CD8-positive, alpha-beta T cell (primary cell): ENCODE measurements at regions of chr11 and their contacts with region 1.

Region 1: GRCh38 chr11:9757809-9758636 is 94.1 kb downstream of the SWAP70 start:
- DNase-seq: peak; percentile 80 to 96 (median 92)
- ATAC-seq: peak; percentile 81
- H3K4me3 ChIP-seq: peak overlapping the region; percentile 83 to 91
- H3K4me3 Mint-ChIP-seq: peak overlapping the region; percentile 83
- H3K27ac ChIP-seq: peak overlapping the region; percentile 36 to 42
- H3K27ac Mint-ChIP-seq: peak overlapping the region; percentile 90
- H3K4me1 ChIP-seq: peaks cover 12% of the 10 kb centered on the region
- H3K4me1 Mint-ChIP-seq: peaks cover 24% of the 10 kb centered on the region
- H3K27me3 ChIP-seq: no peaks in the 10 kb centered on the region
- H3K27me3 Mint-ChIP-seq: no peaks in the 10 kb centered on the region
- CTCF ChIP-seq: peak; percentile 84

Region 2: DNA sequence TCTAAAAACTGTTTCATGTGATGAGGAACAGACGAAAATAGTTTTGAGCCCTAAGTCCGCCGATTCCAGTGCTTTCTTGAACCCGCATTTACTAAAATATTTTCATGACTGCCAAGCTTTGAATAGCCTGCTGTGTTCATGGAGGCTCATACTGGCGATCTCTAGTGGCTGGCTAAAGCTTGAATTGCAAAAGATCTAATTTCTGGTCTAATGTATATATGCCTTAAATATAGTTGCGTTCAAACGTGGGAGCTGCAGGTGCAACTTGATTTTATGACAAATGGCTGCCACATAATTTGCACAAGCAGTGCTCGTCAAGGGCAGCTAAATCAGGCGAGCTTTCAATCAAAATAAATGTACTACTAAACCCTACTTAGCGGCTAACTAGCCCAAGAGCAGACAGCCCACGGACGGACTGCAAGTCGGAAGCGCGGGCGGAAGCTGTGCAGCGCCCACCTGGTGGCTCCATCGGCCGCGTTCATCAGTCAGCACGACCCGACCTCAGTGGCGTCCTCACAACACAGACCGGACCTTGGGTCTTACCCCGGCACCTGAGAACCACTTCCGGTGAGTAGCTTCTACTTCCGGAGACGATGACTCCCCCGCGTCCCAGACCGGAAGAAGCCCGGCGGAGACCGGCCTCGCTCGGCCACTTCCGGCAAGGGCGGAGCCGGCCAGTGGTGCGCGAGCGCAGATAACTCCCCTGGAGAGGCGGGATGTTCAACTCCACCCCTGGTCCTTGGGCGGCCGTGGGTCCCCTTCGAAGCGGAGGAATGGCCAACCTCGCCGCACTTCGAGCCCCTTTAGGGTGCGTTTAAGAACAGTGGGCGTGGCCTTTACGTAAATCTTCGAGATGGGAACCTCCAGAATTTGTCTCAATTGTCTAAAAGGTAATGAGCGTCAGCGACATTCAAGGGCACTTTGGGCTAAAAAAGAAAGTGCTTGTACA is 1069.3 kb before region 1 on chr11:
- CTCF ChIA-PET with region 1: no interaction called
- POLR2A ChIA-PET with region 1: no interaction called
- intact Hi-C with region 1: loop called in 1 of 2 experiments (anchors 5 kb)
- DNase-seq: peak; percentile 51 to 90 (median 80)
- ATAC-seq: peak; percentile 78
- H3K4me3 ChIP-seq: peak overlapping the region; percentile 78 to 79
- H3K4me3 Mint-ChIP-seq: peak overlapping the region; percentile 93
- H3K27ac ChIP-seq: peak overlapping the region; percentile 71 to 83
- H3K27ac Mint-ChIP-seq: peak overlapping the region; percentile 93
- H3K4me1 ChIP-seq: peaks cover 29% of the 10 kb centered on the region
- H3K4me1 Mint-ChIP-seq: peaks cover 41% of the 10 kb centered on the region
- H3K27me3 ChIP-seq: no peaks in the 10 kb centered on the region
- H3K27me3 Mint-ChIP-seq: no peaks in the 10 kb centered on the region
- CTCF ChIP-seq: no peak

Region 3: GRCh38 chr11:9573052-9573774 is 184.8 kb before region 1 on chr11 and contains the start of gene WEE1:
- CTCF ChIA-PET with region 1: no interaction called
- POLR2A ChIA-PET with region 1: no interaction called
- intact Hi-C with region 1: loop called in 1 of 2 experiments (anchors 2 kb)
- DNase-seq: peak; percentile 90 to 97 (median 96)
- ATAC-seq: peak; percentile 90
- H3K4me3 ChIP-seq: peak within 1 kb of the TSS; percentile 76 to 95
- H3K4me3 Mint-ChIP-seq: peak within 1 kb of the TSS; percentile 86
- H3K27ac ChIP-seq: peak within 1 kb of the TSS; percentile 41 to 62
- H3K27ac Mint-ChIP-seq: peak within 1 kb of the TSS; percentile 70
- H3K4me1 ChIP-seq: peaks cover 11% of the 10 kb centered on the region
- H3K4me1 Mint-ChIP-seq: peaks cover 23% of the 10 kb centered on the region
- H3K27me3 ChIP-seq: no peaks in the 10 kb centered on the region
- H3K27me3 Mint-ChIP-seq: peaks cover 11% of the 10 kb centered on the region
- CTCF ChIP-seq: no peak
- total RNA-seq, gene WEE1: 3.9 to 5.3 TPM

Region 4: GRCh38 chr11:9972989-9973388 is 215.0 kb after region 1 on chr11:
- CTCF ChIA-PET with region 1: interaction called, 16 read pairs
- POLR2A ChIA-PET with region 1: interaction called, 3 read pairs
- intact Hi-C with region 1: loop called (anchors 1 to 2 kb)
- DNase-seq: peak in 2 of 9 experiments; percentile 23 to 54
- ATAC-seq: peak; percentile 54
- H3K4me3 ChIP-seq: no peak overlapping the region
- H3K4me3 Mint-ChIP-seq: no peak overlapping the region
- H3K27ac ChIP-seq: no peak overlapping the region
- H3K27ac Mint-ChIP-seq: no peak overlapping the region
- H3K4me1 ChIP-seq: no peaks in the 10 kb centered on the region
- H3K4me1 Mint-ChIP-seq: no peaks in the 10 kb centered on the region
- H3K27me3 ChIP-seq: no peaks in the 10 kb centered on the region
- H3K27me3 Mint-ChIP-seq: no peaks in the 10 kb centered on the region
- CTCF ChIP-seq: peak; percentile 53

Region 5: GRCh38 chr11:10322830-10323792 is 565.1 kb after region 1 on chr11:
- CTCF ChIA-PET with region 1: interaction called, 5 read pairs
- POLR2A ChIA-PET with region 1: interaction called, 3 read pairs
- intact Hi-C with region 1: loop called (anchors 1 to 2 kb)
- DNase-seq: peak in 5 of 9 experiments; percentile 26 to 67 (median 38)
- ATAC-seq: peak; percentile 82
- H3K4me3 ChIP-seq: no peak overlapping the region
- H3K4me3 Mint-ChIP-seq: no peak overlapping the region
- H3K27ac ChIP-seq: no peak overlapping the region
- H3K27ac Mint-ChIP-seq: no peak overlapping the region
- H3K4me1 ChIP-seq: no peaks in the 10 kb centered on the region
- H3K4me1 Mint-ChIP-seq: peaks cover 3% of the 10 kb centered on the region
- H3K27me3 ChIP-seq: no peaks in the 10 kb centered on the region
- H3K27me3 Mint-ChIP-seq: peaks cover 4% of the 10 kb centered on the region
- CTCF ChIP-seq: peak; percentile 55

Region 6: GRCh38 chr11:10750838-10751580 is 993.0 kb after region 1 on chr11 and contains the start of gene CTR9:
- CTCF ChIA-PET with region 1: no interaction called
- POLR2A ChIA-PET with region 1: no interaction called
- intact Hi-C with region 1: loop called in 1 of 2 experiments (anchors 5 kb)
- DNase-seq: peak; percentile 77 to 95 (median 90)
- ATAC-seq: peak; percentile 85
- H3K4me3 ChIP-seq: peak within 1 kb of the TSS; percentile 93 to 98
- H3K4me3 Mint-ChIP-seq: peak within 1 kb of the TSS; percentile 97
- H3K27ac ChIP-seq: peak within 1 kb of the TSS; percentile 66 to 81
- H3K27ac Mint-ChIP-seq: peak within 1 kb of the TSS; percentile 94
- H3K4me1 ChIP-seq: peaks cover 14% of the 10 kb centered on the region
- H3K4me1 Mint-ChIP-seq: peaks cover 33% of the 10 kb centered on the region
- H3K27me3 ChIP-seq: no peaks in the 10 kb centered on the region
- H3K27me3 Mint-ChIP-seq: no peaks in the 10 kb centered on the region
- CTCF ChIP-seq: no peak
- total RNA-seq, gene CTR9: 45.9 to 49.2 TPM